SK-N-SH (cell line): ENCODE measurements at regions of chr9 and their contacts with region 1.

Region 1: DNA sequence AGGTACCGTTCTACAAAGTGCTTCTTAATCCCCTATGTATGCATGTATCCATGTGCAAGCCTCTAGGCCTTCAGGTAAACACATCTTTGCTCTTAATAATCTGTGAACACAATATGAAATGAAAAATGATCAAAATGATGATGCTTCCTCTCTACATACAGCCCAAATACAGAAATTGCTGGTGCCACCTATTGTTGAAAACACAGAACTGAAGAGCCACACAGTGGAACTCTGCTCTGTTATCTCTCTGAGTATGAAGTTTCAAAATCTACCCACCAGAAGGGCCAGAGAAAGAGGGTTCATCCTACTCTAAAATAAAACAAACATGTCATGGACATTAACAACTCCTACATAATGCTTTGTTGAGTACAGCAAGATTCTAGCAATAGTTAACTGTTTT is 71.3 kb downstream of the GLIS3 start:
- DNase-seq: peak; percentile 27
- H3K4me3 ChIP-seq: no peak overlapping the region
- H3K27ac ChIP-seq: no peak overlapping the region
- H3K4me1 ChIP-seq: peaks cover 0 to 25% of the 10 kb centered on the region in 2 experiments; a peak in 2 of 4 replicates
- H3K27me3 ChIP-seq: no peaks in the 10 kb centered on the region
- CTCF ChIP-seq: peak; percentile 72
- EP300 ChIP-seq: no peak
- RAD21 ChIP-seq: peak; percentile 82

Region 2: GRCh38 chr9:3732077-3733038 is 496.2 kb before region 1 on chr9:
- CTCF ChIA-PET with region 1: interaction called, 50 read pairs
- POLR2A ChIA-PET with region 1: no interaction called
- DNase-seq: peak; percentile 77
- H3K4me3 ChIP-seq: peak overlapping the region in 1 of 2 experiments; percentile 33; a peak in 1 of 4 replicates
- H3K27ac ChIP-seq: peak overlapping the region in 1 of 2 experiments; percentile 34; a peak in 1 of 4 replicates
- H3K4me1 ChIP-seq: peaks cover 0 to 4% of the 10 kb centered on the region in 2 experiments; a peak in 1 of 4 replicates
- H3K27me3 ChIP-seq: no peaks in the 10 kb centered on the region
- CTCF ChIP-seq: peak; percentile 87
- EP300 ChIP-seq: no peak
- RAD21 ChIP-seq: peak; percentile 98

Region 3: GRCh38 chr9:4174781-4175180 is 53.8 kb before region 1 on chr9:
- CTCF ChIA-PET with region 1: interaction called, 11 read pairs
- POLR2A ChIA-PET with region 1: no interaction called
- DNase-seq: no peak
- H3K4me3 ChIP-seq: no peak overlapping the region
- H3K27ac ChIP-seq: no peak overlapping the region
- H3K4me1 ChIP-seq: peaks cover 0 to 10% of the 10 kb centered on the region in 2 experiments; a peak in 1 of 4 replicates
- H3K27me3 ChIP-seq: no peaks in the 10 kb centered on the region
- CTCF ChIP-seq: no peak
- EP300 ChIP-seq: no peak
- RAD21 ChIP-seq: no peak

Region 4: DNA sequence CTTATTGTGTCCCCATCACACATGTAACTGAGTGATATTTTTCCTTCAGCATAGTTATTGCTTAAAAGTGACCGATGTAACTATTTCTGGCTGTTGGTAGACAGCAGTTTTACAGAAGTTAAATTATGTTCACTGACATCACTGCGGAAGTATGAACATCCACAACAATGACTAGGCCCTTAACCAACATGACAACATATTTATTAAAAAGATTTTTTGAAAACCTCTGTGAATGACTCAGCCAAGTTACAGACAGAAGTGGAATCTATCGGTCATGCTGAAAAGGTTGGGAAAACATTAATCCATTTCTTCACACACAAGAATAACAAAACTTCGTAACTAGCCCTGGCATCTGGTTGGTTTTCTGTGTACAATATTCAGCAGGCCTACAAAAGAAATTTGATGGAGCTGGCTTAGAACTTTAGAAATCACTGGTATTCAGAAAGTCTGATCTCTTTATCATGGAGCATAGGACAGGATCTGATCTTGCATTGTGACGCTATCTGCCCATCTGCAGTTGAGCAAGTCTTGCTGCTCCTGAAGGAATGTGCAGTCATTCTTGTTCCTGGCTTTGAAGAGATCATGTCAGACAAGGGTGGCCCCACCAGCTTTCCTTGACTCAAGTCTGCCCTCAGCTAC is 64.8 kb after region 1 on chr9:
- CTCF ChIA-PET with region 1: no interaction called
- POLR2A ChIA-PET with region 1: no interaction called
- DNase-seq: no peak
- H3K4me3 ChIP-seq: peak overlapping the region in 1 of 2 experiments; percentile 23; a peak in 2 of 4 replicates
- H3K27ac ChIP-seq: peak overlapping the region; percentile 67 to 99; a peak in 3 of 4 replicates
- H3K4me1 ChIP-seq: peaks cover 12 to 58% of the 10 kb centered on the region in 2 experiments
- H3K27me3 ChIP-seq: no peaks in the 10 kb centered on the region
- CTCF ChIP-seq: no peak
- EP300 ChIP-seq: peak in 1 of 2 experiments; percentile 85; a peak in 2 of 4 replicates
- RAD21 ChIP-seq: no peak